ENCODE measurements at regions of chr12 and their contacts with region 1.

Region 1: DNA sequence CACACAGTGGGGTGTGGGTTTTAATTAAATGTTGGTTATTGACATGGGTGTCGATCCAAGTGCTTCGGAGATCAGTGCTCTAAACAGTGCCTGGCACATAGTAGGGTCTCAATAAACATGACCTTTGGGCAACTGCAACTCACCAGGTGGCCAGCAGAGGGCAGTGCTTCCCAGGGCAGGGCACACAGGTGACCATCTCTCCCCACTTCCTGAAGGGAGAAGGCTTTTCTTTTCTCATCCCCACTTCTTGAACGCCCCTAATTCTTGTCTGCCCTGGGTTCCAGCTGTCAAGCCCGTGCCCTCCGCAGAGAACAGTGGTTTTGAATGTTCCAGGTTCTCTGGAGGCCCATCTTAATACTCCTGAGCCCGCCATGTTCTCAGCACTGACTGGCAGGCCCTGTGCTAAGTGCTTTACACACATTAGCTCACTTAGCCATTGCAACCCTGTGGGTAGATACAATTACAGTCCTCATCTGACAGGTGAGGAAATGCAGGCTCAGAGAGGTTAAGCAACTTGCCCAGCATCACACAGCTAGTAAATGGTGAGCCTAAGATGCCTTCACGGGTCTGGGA is 16.3 kb downstream of the RAPGEF3 start:
- DNase-seq: peak; percentile 49 to 82 (median 61)
- H3K4me3 ChIP-seq: no peak overlapping the region
- H3K4me3 Mint-ChIP-seq: peak overlapping the region in 2 of 7 donors; percentile 3 to 13
- H3K27ac ChIP-seq: no peak overlapping the region
- H3K27ac Mint-ChIP-seq: peak overlapping the region in 1 of 8 donors; percentile 29
- H3K4me1 ChIP-seq: peaks cover 21% of the 10 kb centered on the region
- H3K4me1 Mint-ChIP-seq: peaks cover 19 to 37% (median 25%) of the 10 kb centered on the region in 3 donors
- H3K27me3 ChIP-seq: no peaks in the 10 kb centered on the region
- H3K27me3 Mint-ChIP-seq: peaks cover 5 to 23% of the 10 kb centered on the region in 2 donors

Region 2: DNA sequence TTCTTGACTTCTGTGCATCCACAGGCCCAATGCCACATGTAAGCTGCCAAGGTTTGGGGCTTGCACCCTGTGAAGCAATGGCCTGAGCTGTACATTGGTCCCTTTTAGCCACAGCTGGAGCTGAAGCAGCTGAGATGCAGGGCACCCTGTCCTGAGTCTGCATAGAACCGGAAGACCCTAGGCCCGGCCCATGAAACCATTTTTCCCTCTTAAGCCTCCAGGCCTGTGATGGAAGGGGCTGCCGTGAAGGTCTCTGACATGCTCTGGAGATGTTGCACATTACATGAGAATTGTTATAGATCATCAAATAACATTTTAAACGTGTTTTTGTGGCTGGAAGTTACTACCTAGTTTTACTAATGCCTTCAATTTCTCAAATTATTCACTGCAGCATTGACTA is 225.2 kb before region 1 on chr12:
- CTCF ChIA-PET with region 1: no interaction called
- POLR2A ChIA-PET with region 1: no interaction called
- DNase-seq: no peak
- H3K4me3 ChIP-seq: no peak overlapping the region
- H3K4me3 Mint-ChIP-seq: no peak overlapping the region
- H3K27ac ChIP-seq: no peak overlapping the region
- H3K27ac Mint-ChIP-seq: no peak overlapping the region
- H3K4me1 ChIP-seq: no peaks in the 10 kb centered on the region
- H3K4me1 Mint-ChIP-seq: no peaks in the 10 kb centered on the region
- H3K27me3 ChIP-seq: no peaks in the 10 kb centered on the region
- H3K27me3 Mint-ChIP-seq: no peaks in the 10 kb centered on the region

Region 3: GRCh38 chr12:47715393-47715876 is 26.9 kb before region 1 on chr12:
- CTCF ChIA-PET with region 1: interaction called, 82 read pairs
- POLR2A ChIA-PET with region 1: no interaction called
- DNase-seq: peak; percentile 70 to 84 (median 74)
- H3K4me3 ChIP-seq: no peak overlapping the region
- H3K4me3 Mint-ChIP-seq: no peak overlapping the region
- H3K27ac ChIP-seq: no peak overlapping the region
- H3K27ac Mint-ChIP-seq: peak overlapping the region in 4 of 8 donors; percentile 5 to 69 (median 17)
- H3K4me1 ChIP-seq: peaks cover 21% of the 10 kb centered on the region
- H3K4me1 Mint-ChIP-seq: peaks cover 6 to 16% (median 16%) of the 10 kb centered on the region in 3 donors
- H3K27me3 ChIP-seq: no peaks in the 10 kb centered on the region
- H3K27me3 Mint-ChIP-seq: peaks cover 0 to 2% of the 10 kb centered on the region in 2 donors

Region 4: DNA sequence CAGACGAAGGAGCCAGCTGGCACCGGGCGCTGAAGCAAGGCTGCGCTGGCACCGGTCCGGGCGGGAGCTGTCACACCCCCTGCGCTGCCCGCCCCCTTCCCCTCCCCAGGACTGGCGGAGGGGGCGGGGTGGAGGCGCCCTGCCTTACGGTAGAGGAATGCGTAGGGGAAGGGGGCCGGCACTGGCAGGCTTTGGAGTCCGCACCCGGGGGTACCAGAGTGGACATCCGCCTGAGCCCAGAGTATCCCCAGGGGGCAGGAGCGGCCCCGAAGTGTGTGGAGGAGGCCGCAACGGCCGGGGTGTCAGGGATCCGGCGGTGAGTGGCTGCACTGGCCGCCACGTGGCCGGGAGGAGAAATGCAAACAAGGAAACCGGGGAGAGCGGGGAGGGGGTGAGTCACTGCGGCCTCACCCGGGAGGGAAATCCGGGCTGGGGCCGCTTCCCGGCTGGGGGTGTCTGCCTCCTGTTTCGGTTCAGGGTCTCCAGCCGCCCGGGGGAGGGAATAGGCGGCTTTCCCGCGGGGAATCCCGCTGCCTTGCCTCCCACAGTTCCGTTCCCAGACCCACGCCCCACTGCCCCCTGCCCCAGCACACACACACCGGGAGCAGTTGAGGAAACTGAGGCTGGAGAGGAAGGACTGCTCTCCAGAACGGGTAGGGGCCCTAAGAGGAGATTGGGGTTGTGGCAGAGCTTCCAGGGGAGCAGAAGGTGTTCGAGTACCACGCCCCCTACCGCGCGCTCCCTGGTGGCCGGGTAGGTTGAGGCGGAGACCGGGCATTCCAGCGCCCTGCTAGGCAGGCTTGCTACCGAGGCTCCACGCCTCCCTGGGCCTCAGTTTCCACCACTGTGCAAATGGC is 16.7 kb after region 1 on chr12 and contains the start of gene RAPGEF3:
- CTCF ChIA-PET with region 1: interaction called, 156 read pairs
- POLR2A ChIA-PET with region 1: interaction called, 3 read pairs
- DNase-seq: peak; percentile 51 to 80 (median 60)
- H3K4me3 ChIP-seq: peak within 1 kb of the TSS; percentile 66
- H3K4me3 Mint-ChIP-seq: peak within 1 kb of the TSS; percentile 68 to 90 (median 75)
- H3K27ac ChIP-seq: peak within 1 kb of the TSS; percentile 31
- H3K27ac Mint-ChIP-seq: peak within 1 kb of the TSS in 3 of 8 donors; percentile 23 to 56 (median 50)
- H3K4me1 ChIP-seq: peaks cover 11% of the 10 kb centered on the region
- H3K4me1 Mint-ChIP-seq: peaks cover 11 to 31% (median 15%) of the 10 kb centered on the region in 3 donors
- H3K27me3 ChIP-seq: no peaks in the 10 kb centered on the region
- H3K27me3 Mint-ChIP-seq: no peaks in the 10 kb centered on the region
- total RNA-seq, gene RAPGEF3: 0.95 to 1.1 TPM

Region 5: DNA sequence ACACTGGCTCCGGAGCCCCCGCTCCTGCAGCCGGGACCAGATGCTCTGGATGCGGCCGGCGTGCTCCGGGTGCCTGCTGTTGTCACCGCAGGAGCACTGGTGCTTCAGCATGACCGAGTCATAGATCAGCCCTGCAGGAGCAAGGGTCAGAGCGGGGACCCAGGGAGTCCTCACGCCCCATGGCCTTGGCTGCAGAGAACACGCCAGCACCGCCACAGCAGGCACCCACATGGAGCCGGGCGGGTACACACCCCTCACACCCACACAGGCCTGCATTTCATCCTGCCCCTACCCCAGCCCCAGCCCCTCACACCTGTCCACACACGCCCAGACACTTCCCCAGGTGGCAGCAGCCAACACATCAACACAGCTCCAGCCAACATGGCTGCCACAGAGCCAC is 49.5 kb after region 1 on chr12:
- CTCF ChIA-PET with region 1: interaction called, 10 read pairs
- POLR2A ChIA-PET with region 1: no interaction called
- DNase-seq: no peak
- H3K4me3 ChIP-seq: no peak overlapping the region
- H3K4me3 Mint-ChIP-seq: no peak overlapping the region
- H3K27ac ChIP-seq: no peak overlapping the region
- H3K27ac Mint-ChIP-seq: no peak overlapping the region
- H3K4me1 ChIP-seq: no peaks in the 10 kb centered on the region
- H3K4me1 Mint-ChIP-seq: peaks cover 0 to 1% (median 0%) of the 10 kb centered on the region in 3 donors
- H3K27me3 ChIP-seq: no peaks in the 10 kb centered on the region
- H3K27me3 Mint-ChIP-seq: no peaks in the 10 kb centered on the region